Stomach (tissue), 19 donors: ENCODE measurements at regions of chr6 and their contacts with region 1.

Region 1: GRCh38 chr6:44237813-44238433 is 9.0 kb upstream of the HSP90AB1 start:
- DNase-seq: peak; percentile 79 to 94
- H3K4me3 ChIP-seq: peak overlapping the region; percentile 44 to 67 (median 54)
- H3K27ac ChIP-seq: peak overlapping the region; percentile 95 to 99 (median 96)
- H3K4me1 ChIP-seq: peaks cover 42 to 58% (median 50%) of the 10 kb centered on the region in 4 donors
- H3K27me3 ChIP-seq: no peaks in the 10 kb centered on the region
- CTCF ChIP-seq: peak in 6 of 7 experiments; percentile 72 to 99 (median 97)
- EP300 ChIP-seq: no peak
- POLR2A ChIP-seq: no peak

Region 2: DNA sequence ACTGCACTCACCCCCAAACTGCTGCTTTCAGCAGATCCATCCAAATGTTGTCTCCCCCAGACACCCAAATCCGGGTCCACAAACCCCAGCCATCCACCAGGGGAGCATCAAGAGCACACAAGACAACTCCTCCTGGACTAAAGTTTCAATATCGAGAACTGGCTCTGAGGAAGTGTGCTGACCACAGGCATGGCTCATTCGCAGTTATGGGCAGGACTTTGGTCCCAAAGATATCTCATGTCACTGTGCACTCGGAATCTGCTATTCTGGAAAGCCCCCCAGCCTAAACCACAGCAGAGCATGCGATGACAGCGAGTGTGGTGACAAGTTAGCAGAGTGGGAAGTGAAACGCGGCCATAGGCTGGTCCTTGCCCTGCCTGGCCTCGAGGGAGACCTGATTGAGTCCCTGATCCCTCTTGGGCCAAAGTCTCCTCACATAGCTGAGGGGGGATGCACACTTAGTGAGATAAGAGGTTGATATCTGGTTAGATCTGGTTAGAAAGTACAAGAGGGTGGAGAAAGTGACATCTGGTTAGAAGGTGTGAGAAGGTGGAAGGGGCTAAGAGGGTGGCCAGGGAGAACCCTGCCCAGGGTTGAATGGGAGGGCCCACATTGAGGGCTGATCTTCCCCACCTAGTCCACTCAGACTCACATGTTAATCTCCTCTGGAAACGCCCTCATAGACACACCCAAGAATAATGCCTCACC is 260.4 kb before region 1 on chr6:
- intact Hi-C with region 1: no loop called
- DNase-seq: peak in 1 of 2 donors; percentile 23
- H3K4me3 ChIP-seq: no peak overlapping the region
- H3K27ac ChIP-seq: no peak overlapping the region
- H3K4me1 ChIP-seq: peaks cover 9 to 15% (median 11%) of the 10 kb centered on the region in 4 donors
- H3K27me3 ChIP-seq: no peaks in the 10 kb centered on the region
- CTCF ChIP-seq: no peak
- EP300 ChIP-seq: no peak
- POLR2A ChIP-seq: no peak

Region 3: DNA sequence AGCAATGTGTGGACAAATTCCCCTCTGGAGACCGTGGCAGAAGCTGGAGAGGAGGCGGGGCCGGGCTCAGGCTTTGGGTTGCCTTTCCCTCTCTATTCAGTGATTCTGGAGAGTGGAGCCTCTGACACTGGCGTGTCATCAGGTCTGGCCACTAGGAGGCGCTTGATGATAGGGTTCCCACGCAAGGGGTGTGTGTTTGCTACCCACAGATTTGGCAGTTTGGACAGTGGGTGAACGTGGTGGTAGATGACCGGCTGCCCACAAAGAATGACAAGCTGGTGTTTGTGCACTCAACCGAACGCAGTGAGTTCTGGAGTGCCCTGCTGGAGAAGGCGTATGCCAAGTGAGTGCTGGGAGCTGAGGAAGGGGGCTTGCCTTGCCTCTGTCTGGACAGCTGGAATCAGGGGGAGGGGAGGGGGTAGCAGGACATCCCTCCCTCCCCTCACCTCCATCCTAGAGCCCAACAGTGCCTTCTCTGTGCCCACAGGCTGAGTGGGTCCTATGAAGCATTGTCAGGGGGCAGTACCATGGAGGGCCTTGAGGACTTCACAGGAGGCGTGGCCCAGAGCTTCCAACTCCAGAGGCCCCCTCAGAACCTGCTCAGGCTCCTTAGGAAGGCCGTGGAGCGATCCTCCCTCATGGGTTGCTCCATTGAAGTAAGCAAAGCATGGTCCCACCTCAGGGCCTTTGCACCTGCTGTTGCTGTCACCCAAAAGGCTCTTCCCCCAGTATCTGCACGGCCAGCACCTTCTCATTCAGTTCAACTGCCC is 65.0 kb before region 1 on chr6:
- intact Hi-C with region 1: loop called (anchors 10 kb)
- DNase-seq: peak; percentile 90 to 92
- H3K4me3 ChIP-seq: no peak overlapping the region
- H3K27ac ChIP-seq: no peak overlapping the region
- H3K4me1 ChIP-seq: peaks cover 7 to 25% (median 17%) of the 10 kb centered on the region in 4 donors
- H3K27me3 ChIP-seq: no peaks in the 10 kb centered on the region
- CTCF ChIP-seq: peak in 5 of 7 experiments; percentile 75 to 95 (median 88)
- EP300 ChIP-seq: no peak
- POLR2A ChIP-seq: no peak

Region 4: DNA sequence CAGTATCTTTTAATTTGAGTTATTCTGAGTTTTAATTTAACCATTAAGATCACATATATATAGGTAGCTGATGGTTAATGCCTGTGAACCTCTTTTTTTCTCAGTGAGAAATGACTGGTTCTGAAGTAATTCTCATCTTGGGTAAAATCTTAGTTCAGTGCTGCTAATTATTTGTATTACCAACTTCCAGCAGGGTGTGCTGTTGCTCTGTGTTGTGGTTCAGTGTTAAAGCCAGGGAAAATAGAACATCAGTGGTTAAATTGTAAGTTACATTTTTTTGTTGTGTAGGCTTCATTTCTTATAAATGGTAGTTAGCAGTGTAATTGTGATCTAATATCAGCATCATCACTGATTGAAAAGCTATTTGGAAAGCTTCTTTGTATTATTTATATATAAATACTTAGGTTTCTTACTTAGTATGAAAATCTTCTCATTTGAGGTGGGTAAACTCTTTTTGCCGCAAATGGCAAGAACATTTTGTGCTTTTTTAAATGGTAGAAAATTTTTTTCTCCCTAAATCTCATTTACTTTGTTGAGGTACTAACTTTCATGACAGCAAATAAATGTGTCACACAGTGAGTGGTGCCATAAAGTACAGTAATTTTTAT is 193.3 kb after region 1 on chr6:
- intact Hi-C with region 1: no loop called
- DNase-seq: peak; percentile 37 to 88
- H3K4me3 ChIP-seq: no peak overlapping the region
- H3K27ac ChIP-seq: no peak overlapping the region
- H3K4me1 ChIP-seq: peaks cover 0 to 46% (median 19%) of the 10 kb centered on the region in 4 donors
- H3K27me3 ChIP-seq: no peaks in the 10 kb centered on the region
- CTCF ChIP-seq: peak in 5 of 7 experiments; percentile 35 to 72 (median 63)
- EP300 ChIP-seq: no peak
- POLR2A ChIP-seq: no peak

Region 5: DNA sequence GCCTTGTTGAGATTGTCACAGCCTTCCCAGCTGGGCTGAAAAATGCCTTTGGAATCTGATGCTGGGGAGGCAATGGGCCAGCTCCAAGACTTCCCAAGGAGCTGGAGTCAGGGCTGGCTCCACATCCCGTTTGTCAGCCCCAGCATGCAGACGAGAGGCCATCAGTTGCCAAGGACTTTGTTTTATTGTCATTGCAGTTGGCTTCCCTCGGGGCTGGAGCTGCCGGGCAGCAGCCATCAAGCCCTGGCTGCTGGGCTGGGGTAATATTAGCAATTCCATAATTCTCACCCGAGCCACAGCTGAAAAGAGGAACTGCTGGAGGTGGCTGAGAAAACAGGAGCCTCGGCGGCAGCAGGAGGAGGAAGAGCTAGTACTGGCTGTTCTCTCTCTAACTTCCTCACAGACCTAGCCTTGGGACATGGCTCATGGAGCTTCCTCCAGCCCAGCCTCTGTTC is 332.0 kb after region 1 on chr6:
- intact Hi-C with region 1: no loop called
- DNase-seq: peak in 1 of 2 donors; percentile 65
- H3K4me3 ChIP-seq: no peak overlapping the region
- H3K27ac ChIP-seq: peak overlapping the region in 2 of 5 donors; percentile 14 to 52
- H3K4me1 ChIP-seq: peaks cover 0 to 13% (median 6%) of the 10 kb centered on the region in 4 donors
- H3K27me3 ChIP-seq: no peaks in the 10 kb centered on the region
- CTCF ChIP-seq: no peak
- EP300 ChIP-seq: no peak
- POLR2A ChIP-seq: no peak